ENCODE measurements at regions of chr14 and their contacts with region 1.

Region 1: GRCh38 chr14:24146978-24147760 is at the start of gene RNF31:
- DNase-seq: peak; percentile 97
- H3K4me3 Mint-ChIP-seq: peak within 1 kb of the TSS; percentile 100
- H3K27ac Mint-ChIP-seq: peak within 1 kb of the TSS; percentile 100
- H3K4me1 Mint-ChIP-seq: peaks cover 43% of the 10 kb centered on the region
- H3K27me3 Mint-ChIP-seq: no peaks in the 10 kb centered on the region
- total RNA-seq, gene RNF31: 80.4 and 92.0 TPM in 2 replicates

Region 2: DNA sequence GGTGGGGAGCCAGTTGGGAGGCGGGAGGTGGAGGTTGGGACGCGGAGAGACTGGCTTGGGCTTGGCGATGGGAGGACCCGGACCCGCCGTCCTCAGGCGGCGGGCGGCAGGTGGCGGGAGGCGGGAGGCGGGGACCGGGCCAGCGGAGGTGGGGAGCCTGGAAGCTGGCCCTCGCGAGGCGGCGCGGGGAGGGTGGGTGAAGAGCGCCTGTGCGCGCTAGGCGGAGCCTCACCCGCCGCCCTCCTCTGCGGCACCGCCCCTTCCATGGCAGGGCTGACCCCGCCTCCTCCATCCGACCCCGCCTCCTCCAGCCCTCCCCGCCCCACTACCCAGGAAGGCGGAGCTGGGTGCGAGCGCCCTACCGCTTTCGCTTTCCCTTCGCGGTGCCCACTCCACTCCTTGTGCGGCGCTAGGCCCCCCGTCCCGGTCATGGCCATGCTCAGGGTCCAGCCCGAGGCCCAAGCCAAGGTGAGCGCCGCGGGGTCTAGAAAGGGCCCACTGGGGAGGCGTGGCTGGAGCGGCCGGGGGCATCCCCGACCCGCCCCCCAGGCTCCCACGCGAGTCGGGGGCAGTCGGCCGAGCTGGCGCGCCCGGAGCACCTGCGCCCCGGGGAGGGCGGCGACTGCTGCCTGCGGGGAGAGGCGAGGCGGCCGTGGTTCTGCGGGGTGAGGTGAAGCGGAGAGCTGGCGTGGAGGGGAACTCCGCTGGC is 11.2 kb before region 1 on chr14 and contains the start of gene PSME1:
- intact Hi-C with region 1: loop called (anchors 1 kb)
- DNase-seq: peak; percentile 93
- H3K4me3 Mint-ChIP-seq: peak within 1 kb of the TSS; percentile 92
- H3K27ac Mint-ChIP-seq: peak within 1 kb of the TSS; percentile 91
- H3K4me1 Mint-ChIP-seq: peaks cover 47% of the 10 kb centered on the region
- H3K27me3 Mint-ChIP-seq: no peaks in the 10 kb centered on the region
- total RNA-seq, gene PSME1: 340 and 342 TPM in 2 replicates

Region 3: GRCh38 chr14:24188251-24189058 is 41.3 kb after region 1 on chr14 and contains the start of gene IPO4:
- intact Hi-C with region 1: loop called (anchors 2 kb)
- DNase-seq: peak; percentile 93
- H3K4me3 Mint-ChIP-seq: peak within 1 kb of the TSS; percentile 88
- H3K27ac Mint-ChIP-seq: peak within 1 kb of the TSS; percentile 81
- H3K4me1 Mint-ChIP-seq: peaks cover 23% of the 10 kb centered on the region
- H3K27me3 Mint-ChIP-seq: no peaks in the 10 kb centered on the region
- total RNA-seq, gene IPO4: 77.0 and 80.4 TPM in 2 replicates

Region 4: DNA sequence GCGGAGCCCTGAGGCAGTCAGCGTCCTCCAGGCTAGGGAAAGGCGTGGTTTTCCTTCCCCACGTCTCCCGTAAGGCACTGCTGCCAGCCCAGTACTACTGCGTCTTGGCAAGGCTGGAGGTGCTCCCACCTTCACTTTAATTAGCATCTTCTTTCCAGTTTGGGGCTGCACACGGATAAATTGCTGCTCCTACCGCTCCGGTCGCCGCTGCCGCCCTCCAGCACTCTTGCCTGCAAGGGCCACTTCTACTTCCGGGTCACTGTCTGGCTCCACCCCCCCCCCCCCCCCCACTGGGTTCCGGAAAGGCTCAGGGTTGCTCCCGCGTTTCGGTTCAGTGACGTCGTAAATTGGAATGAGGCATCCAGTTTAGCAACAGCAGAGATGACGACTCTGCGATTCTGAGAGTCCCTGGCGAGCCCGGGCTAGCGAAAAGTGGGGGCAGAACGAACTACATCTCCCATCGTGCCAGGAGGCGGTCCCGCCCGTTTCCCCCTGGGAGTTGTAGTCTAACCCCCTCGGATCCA is 85.0 kb after region 1 on chr14 and contains the start of gene NEDD8:
- intact Hi-C with region 1: loop called (anchors 1 kb)
- DNase-seq: peak; percentile 89
- H3K4me3 Mint-ChIP-seq: peak within 1 kb of the TSS; percentile 97
- H3K27ac Mint-ChIP-seq: peak within 1 kb of the TSS; percentile 91
- H3K4me1 Mint-ChIP-seq: peaks cover 44% of the 10 kb centered on the region
- H3K27me3 Mint-ChIP-seq: no peaks in the 10 kb centered on the region
- total RNA-seq, gene NEDD8: 194 and 202 TPM in 2 replicates

Measured in activated T-helper 2 cell treated with anti-CD3 and anti-CD28 coated beads, Interferon-gamma antibody, Interleukin-2, Interleukin-4, amounts not matched to agents 10 μg/mL and 5 μg/mL and 100 μg/mL, durations not matched to agents 14 hours and 24 hours and 36 hours (primary cell).